ENCODE measurements at regions of chr6 and their contacts with region 1.

Region 1: GRCh38 chr6:53461041-53461656 is 83.8 kb downstream of the GCLC start:
- DNase-seq: peak; percentile 71
- ATAC-seq: peak; percentile 75
- H3K4me3 ChIP-seq: peak overlapping the region in 3 of 5 experiments; percentile 22 to 45 (median 34)
- H3K4me3 Mint-ChIP-seq: peak overlapping the region; percentile 54
- H3K27ac ChIP-seq: peak overlapping the region; percentile 90 to 93
- H3K27ac Mint-ChIP-seq: peak overlapping the region; percentile 97
- H3K4me1 ChIP-seq: peaks cover 80 to 88% of the 10 kb centered on the region in 2 donors
- H3K4me1 Mint-ChIP-seq: peaks cover 90% of the 10 kb centered on the region
- H3K27me3 ChIP-seq: no peaks in the 10 kb centered on the region
- H3K27me3 Mint-ChIP-seq: no peaks in the 10 kb centered on the region
- CTCF ChIP-seq: no peak

Region 2: DNA sequence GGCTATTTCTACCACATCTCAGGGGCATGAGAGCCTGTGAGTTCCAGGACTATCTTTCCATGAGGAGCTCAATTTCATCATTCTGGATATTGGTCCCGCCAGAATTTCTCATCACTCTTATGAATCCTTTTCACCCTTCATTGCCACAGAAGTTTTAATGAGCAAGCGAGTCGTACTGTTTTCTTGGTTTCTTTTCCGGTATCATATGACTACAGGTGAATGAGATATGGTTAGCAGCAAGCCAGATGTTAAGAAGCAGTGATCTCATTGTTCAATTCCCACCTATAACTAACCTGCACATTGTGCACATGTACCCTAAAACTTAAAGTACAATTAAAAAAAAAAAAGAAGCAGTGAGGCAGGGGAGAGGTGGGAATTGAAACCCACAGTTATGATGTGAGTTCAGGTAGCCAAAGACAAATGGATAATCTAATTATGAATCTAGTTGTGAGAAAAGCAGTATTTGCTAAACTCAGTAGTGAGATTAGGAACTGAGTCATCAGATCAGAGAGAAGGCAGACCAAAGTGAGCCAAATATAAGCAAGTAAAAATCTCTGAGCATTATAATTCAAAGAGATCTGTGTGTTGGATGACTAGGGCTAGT is 34.4 kb before region 1 on chr6:
- CTCF ChIA-PET with region 1: no interaction called
- POLR2A ChIA-PET with region 1: no interaction called
- intact Hi-C with region 1: loop called (anchors 5 kb)
- DNase-seq: no peak
- ATAC-seq: no peak
- H3K4me3 ChIP-seq: no peak overlapping the region
- H3K4me3 Mint-ChIP-seq: peak overlapping the region; percentile 29
- H3K27ac ChIP-seq: no peak overlapping the region
- H3K27ac Mint-ChIP-seq: no peak overlapping the region
- H3K4me1 ChIP-seq: peaks cover 9 to 12% of the 10 kb centered on the region in 2 donors
- H3K4me1 Mint-ChIP-seq: peaks cover 31% of the 10 kb centered on the region
- H3K27me3 ChIP-seq: no peaks in the 10 kb centered on the region
- H3K27me3 Mint-ChIP-seq: no peaks in the 10 kb centered on the region
- CTCF ChIP-seq: no peak

Region 3: GRCh38 chr6:53437557-53438202 is 23.5 kb before region 1 on chr6:
- CTCF ChIA-PET with region 1: interaction called, 10 read pairs
- POLR2A ChIA-PET with region 1: no interaction called
- intact Hi-C with region 1: no loop called
- DNase-seq: peak; percentile 51
- ATAC-seq: peak; percentile 73
- H3K4me3 ChIP-seq: no peak overlapping the region
- H3K4me3 Mint-ChIP-seq: no peak overlapping the region
- H3K27ac ChIP-seq: no peak overlapping the region
- H3K27ac Mint-ChIP-seq: peak overlapping the region; percentile 32
- H3K4me1 ChIP-seq: peaks cover 0 to 13% of the 10 kb centered on the region in 2 donors
- H3K4me1 Mint-ChIP-seq: peaks cover 23% of the 10 kb centered on the region
- H3K27me3 ChIP-seq: no peaks in the 10 kb centered on the region
- H3K27me3 Mint-ChIP-seq: no peaks in the 10 kb centered on the region
- CTCF ChIP-seq: peak; percentile 60